ENCODE measurements at regions of chr3 and their contacts with region 1.

Region 1: GRCh38 chr3:158109804-158110657 is at the start of gene RSRC1:
- DNase-seq: peak; percentile 83
- CTCF ChIP-seq: no peak

Region 2: DNA sequence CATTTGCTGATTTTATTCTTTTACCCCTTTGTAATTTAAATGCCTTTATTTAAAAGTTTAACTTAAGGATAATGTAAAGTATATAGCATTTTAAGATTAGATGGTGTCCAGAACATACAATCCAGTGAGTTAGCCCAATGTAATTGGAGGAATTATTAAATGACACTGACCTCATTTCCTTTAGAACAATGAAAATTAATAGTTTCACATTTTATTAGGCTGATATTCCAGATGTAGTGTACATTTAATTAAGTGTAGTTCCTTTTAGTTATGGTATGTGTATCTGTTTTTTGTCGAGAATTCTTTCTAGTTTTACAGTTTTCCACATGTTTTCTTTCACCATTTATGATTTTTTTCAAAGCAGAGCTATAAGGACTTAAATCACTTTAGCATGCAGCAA is 75.7 kb after region 1 on chr3:
- in situ Hi-C with region 1: no loop called
- DNase-seq: no peak
- CTCF ChIP-seq: no peak

Region 3: DNA sequence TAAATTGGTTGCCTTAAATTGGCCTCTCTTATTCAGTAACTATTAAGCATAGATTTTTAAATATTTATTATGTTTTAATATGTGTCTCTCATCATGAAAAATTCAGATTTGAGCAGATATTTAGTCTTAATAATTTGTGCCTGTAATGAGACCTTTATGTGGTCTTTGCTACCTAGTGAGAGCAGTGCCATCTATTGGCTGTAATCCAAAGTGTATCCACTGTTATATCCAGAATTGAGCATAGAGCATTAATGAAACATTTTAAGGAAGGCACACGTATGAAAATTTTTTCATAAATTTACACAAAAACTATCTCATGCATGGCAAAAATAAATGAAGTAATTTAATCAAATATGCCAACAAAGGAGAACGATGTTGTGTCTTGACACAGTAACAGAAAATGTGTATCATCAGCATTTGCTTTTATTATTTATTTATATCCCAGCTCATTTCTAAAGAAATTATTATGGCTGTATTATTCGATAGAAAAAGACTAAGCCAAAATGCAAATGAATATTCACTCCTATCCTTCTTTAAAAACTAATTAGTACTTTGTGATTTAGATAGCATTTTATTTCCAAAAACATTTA is 203.4 kb after region 1 on chr3:
- in situ Hi-C with region 1: loop called (anchors 25 kb)
- DNase-seq: no peak
- CTCF ChIP-seq: peak; percentile 41

Region 4: GRCh38 chr3:158434412-158435038 is 324.5 kb after region 1 on chr3:
- in situ Hi-C with region 1: loop called (anchors 10 kb)
- DNase-seq: no peak
- CTCF ChIP-seq: peak; percentile 62

Measured in GM13976 (cell line).